ENCODE measurements at regions of chr1 and their contacts with region 1.

Region 1: DNA sequence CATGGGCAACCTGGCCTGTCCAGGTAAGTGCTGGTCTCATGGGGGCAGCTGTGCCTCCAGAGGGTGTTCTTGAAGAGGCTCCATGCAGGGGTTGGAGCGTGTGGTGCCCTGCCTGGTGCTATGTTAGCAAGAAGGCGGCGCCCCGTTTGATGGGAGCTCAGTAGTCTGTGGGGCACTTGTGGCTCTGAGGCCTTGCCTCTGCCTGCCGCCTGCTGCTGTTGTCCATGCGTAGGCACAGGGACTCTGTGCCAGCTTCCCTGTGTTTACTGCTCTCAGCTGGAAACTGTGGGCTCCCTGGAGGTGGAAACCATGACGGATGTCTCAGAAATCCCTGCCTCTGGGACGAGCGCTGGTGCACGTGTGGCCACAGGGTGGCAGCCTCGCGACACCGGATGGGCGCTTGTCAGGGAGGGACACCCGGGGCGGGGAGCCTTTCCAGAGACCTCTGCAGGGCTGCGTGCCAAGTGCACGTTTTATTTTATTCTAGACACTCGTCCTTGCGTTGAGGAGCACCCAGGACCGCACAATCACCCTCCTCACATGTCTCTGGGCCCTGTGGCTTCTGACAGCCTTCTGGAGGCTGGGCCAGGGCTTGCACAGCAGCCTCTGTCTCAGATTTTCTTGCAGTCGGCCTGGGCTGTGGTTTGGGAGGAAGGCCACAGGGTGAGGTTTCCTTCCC is 27.1 kb downstream of the SNAP47 start:
- DNase-seq: peak; percentile 97
- ATAC-seq: peak; percentile 35
- H3K4me3 ChIP-seq: no peak overlapping the region
- H3K27ac ChIP-seq: peak overlapping the region; percentile 62
- H3K4me1 ChIP-seq: peaks cover 77% of the 10 kb centered on the region
- H3K27me3 ChIP-seq: no peaks in the 10 kb centered on the region
- CTCF ChIP-seq: peak; percentile 100

Region 2: DNA sequence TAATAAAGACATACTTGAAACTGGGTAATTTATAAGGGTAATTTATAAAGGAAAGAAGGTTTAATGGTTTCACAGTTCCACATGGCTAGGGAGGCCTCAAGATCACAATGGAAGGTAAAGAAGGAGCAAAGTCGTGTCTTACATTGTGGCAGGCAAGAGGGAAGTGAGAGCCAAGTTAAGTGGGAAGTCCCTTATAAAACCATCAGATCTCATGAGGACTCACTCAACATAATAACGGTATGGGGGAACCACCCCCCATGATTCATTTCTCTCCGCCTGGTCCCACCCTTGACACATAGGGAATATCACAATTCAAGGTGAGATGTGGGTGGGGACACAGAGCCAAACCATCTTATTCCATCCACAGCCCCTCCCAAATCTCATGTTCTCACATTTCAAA is 275.8 kb before region 1 on chr1:
- CTCF ChIA-PET with region 1: no interaction called
- POLR2A ChIA-PET with region 1: no interaction called
- intact Hi-C with region 1: loop called (anchors 1 kb)
- DNase-seq: no peak
- ATAC-seq: no peak
- H3K4me3 ChIP-seq: no peak overlapping the region
- H3K27ac ChIP-seq: no peak overlapping the region
- H3K4me1 ChIP-seq: no peaks in the 10 kb centered on the region
- H3K27me3 ChIP-seq: 0 out of 2 replicates have a peak, but pooled peaks cover 6% of the 10 kb centered on the region
- CTCF ChIP-seq: no peak

Region 3: DNA sequence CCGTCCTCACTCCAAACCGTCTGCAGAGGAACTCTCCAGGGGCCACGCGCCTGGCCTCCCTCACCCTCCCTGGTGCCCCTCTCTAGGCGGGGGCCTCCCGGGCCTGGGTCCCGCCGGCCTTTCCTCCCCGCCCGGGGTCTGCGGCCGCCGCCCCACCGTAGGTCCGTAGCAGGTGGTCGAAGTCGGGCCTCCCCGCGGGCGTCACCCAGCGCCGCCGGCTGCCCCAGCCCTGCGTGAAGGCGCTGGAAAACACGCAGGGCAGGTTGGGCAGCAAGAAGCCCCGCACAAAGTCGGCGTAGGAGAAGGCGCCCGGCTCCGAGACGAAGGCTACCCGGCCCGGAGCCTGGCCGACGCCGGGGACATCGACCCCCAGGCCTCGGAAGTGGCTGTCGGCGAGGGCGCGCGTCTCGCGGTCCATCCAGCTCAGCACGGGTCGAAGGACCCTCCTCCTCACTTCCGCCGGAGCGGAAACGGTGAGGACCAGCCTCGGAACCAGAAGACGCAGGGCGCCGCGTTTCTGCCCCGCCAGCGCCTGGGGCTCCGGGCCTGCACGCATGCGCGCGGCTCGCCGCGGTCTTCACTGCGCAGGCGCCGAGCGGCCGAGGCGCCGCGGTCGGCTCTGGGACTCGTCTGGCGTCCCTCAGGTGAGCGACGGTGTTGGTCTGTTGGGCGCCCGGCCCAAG is 27.4 kb before region 1 on chr1 and contains the starts of genes JMJD4 and SNAP47:
- CTCF ChIA-PET with region 1: interaction called, 10 read pairs
- POLR2A ChIA-PET with region 1: interaction called, 3 read pairs
- intact Hi-C with region 1: loop called (anchors 2 kb)
- DNase-seq: peak; percentile 99
- ATAC-seq: peak; percentile 89
- H3K4me3 ChIP-seq: peak within 1 kb of the TSS; percentile 80
- H3K27ac ChIP-seq: peak within 1 kb of the TSS; percentile 22
- H3K4me1 ChIP-seq: peaks cover 22% of the 10 kb centered on the region
- H3K27me3 ChIP-seq: no peaks in the 10 kb centered on the region
- CTCF ChIP-seq: no peak
- total RNA-seq, gene JMJD4: 80.5 and 87.8 TPM in 2 replicates
- total RNA-seq, gene SNAP47: 123 and 145 TPM in 2 replicates

Region 4: DNA sequence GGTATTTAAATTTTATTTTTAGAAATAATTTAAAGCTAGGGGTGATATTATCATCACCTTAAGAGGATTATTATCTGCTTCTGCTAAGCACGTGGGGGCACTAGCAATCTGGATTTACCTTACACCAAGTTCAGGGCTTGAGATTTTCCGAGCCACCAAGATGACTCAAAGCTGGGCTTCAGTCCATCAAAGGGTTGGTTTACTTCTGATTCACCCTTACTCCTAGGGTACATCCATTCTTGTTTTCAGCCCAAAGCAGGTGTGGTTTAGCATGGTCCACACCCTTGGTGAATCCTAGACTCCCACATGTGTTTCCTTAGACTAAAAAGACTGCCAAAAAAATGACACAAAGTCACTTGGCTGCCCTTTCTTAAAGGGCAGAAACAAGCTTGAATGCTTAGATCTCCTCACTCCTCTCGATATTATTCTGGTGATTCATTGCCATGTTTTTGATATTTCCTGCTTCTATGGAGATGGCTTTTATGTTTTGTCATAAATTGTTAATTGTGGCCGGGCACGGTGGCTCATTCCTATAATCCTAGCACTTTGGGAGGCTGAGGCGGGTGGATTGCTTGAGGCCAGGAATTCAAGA is 43.3 kb after region 1 on chr1:
- CTCF ChIA-PET with region 1: interaction called, 5 read pairs
- POLR2A ChIA-PET with region 1: no interaction called
- intact Hi-C with region 1: loop called (anchors 1 kb)
- DNase-seq: peak; percentile 100
- ATAC-seq: peak; percentile 99
- H3K4me3 ChIP-seq: no peak overlapping the region
- H3K27ac ChIP-seq: peak overlapping the region; percentile 81
- H3K4me1 ChIP-seq: peaks cover 20% of the 10 kb centered on the region
- H3K27me3 ChIP-seq: no peaks in the 10 kb centered on the region
- CTCF ChIP-seq: peak; percentile 79

Region 5: GRCh38 chr1:227946624-227947385 is 184.4 kb after region 1 on chr1:
- CTCF ChIA-PET with region 1: interaction called, 11 read pairs
- POLR2A ChIA-PET with region 1: no interaction called
- intact Hi-C with region 1: loop called (anchors 1 kb)
- DNase-seq: peak; percentile 98
- ATAC-seq: peak; percentile 63
- H3K4me3 ChIP-seq: peak overlapping the region; percentile 75
- H3K27ac ChIP-seq: peak overlapping the region; percentile 77
- H3K4me1 ChIP-seq: peaks cover 28% of the 10 kb centered on the region
- H3K27me3 ChIP-seq: no peaks in the 10 kb centered on the region
- CTCF ChIP-seq: peak; percentile 99

Region 6: DNA sequence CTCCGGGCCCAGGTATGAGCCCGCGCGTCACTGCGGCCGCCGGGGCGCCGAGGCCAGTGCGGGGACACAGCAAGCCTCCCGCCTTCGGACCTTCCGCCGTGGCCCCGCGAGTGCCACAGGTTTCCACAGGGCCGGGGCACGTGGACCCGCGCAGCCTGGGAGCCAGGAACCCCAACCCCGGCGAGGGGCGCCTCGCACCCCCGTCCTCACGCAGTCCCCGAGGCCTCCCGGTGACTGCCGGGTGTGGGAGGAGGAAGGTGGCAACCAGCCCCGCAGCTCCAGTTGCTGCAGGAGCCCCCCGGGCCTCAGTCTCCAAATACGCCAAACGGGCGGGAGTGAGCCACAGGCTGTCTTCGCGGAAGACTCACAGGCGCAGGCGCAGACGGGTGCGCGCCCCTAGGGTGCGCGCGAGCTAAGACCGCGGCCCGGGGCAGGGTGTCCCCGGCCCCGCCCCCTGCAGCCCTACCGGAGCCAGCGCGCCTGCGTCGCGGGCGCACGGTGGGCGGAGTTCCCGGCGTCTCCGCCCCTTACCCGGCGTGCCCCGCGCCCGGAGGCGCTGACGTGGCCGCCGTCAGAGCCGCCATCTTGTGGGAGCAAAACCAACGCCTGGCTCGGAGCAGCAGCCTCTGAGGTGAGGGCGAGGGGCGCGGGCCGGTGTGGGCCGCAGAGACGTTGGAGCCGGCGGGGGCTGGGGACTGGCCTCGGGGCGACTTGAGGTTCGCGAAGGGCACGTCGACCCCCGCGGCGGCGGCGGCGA is 319.9 kb after region 1 on chr1 and contains the start of gene ARF1:
- CTCF ChIA-PET with region 1: no interaction called
- POLR2A ChIA-PET with region 1: no interaction called
- intact Hi-C with region 1: loop called (anchors 10 kb)
- DNase-seq: peak; percentile 100
- ATAC-seq: peak; percentile 78
- H3K4me3 ChIP-seq: peak within 1 kb of the TSS; percentile 80
- H3K27ac ChIP-seq: peak within 1 kb of the TSS; percentile 33
- H3K4me1 ChIP-seq: peaks cover 37% of the 10 kb centered on the region
- H3K27me3 ChIP-seq: no peaks in the 10 kb centered on the region
- CTCF ChIP-seq: no peak
- total RNA-seq, gene ARF1: 685 and 688 TPM in 2 replicates